Sigmoid colon (tissue), 7 donors: ENCODE measurements at regions of chr11 and their contacts with region 1.

Region 1: DNA sequence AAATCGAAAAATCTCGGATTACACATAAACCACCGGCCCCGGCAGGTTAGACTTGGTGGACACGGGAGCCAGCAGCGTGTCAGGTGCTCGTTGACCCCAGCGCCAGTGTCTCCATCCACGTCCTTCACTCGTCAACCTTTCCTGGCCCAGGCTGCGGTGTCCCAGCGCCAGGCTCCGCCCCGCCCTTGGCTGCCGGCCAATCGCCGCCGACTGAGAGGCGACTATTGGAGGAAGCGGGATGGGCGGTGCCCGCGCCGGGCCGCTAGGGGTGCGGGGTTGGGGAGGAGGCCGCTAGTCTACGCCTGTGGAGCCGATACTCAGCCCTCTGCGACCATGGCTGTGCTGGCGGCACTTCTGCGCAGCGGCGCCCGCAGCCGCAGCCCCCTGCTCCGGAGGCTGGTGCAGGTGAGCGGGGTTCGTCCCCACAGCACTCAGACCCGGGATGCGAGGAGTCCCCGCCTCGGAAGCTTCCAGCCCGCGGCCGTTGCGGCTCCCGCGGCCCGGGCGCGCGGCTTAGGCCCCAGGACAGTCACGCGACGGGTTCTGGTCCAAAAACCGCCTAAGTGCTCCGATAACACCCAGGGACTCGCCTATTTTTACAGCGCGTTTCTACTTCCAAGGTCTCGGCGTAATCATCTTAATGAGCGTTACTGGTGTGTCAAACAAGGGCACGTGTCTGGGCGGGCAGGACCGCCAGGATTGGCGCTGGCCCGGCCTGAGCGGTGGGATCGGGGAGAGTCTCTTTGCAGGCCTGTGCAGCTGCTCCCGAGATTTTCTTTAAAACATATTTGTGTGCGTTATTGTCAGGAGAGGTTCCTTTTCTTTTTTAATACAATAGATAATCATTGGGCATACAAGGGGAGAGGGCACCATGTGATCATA is at the start of gene ACAT1:
- DNase-seq: peak; percentile 99
- H3K4me3 ChIP-seq: peak within 1 kb of the TSS; percentile 59 to 84 (median 72)
- H3K27ac ChIP-seq: peak within 1 kb of the TSS; percentile 87 to 96 (median 92)
- H3K4me1 ChIP-seq: peaks cover 0 to 39% (median 34%) of the 10 kb centered on the region in 4 donors
- H3K27me3 ChIP-seq: no peaks in the 10 kb centered on the region
- CTCF ChIP-seq: peak; percentile 31 to 50 (median 36)
- EP300 ChIP-seq: no peak
- POLR2A ChIP-seq: peak; percentile 84 to 92
- total RNA-seq, gene ACAT1: 142 to 225 (median 163) TPM

Region 2: DNA sequence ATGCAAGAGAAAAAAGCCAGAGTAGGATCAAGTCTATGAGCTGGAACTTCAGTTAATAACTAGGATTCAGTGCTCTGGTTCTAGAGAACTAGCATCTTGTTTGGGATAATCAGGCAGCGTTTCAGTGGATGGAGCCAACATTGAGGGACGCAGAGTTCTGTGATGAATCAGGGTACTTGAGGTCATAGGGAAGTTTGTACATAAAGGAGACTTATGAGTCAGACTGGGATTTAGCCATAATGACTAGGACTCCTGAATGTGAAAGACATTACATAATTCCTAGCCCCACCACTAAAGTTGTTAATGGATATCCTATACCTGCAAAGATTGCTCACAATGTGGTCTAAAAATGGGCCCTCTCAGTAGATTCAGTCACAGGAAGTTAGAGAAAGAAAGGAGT is 416.5 kb before region 1 on chr11:
- intact Hi-C with region 1: no loop called
- DNase-seq: no peak
- H3K4me3 ChIP-seq: no peak overlapping the region
- H3K27ac ChIP-seq: no peak overlapping the region
- H3K4me1 ChIP-seq: no peaks in the 10 kb centered on the region
- H3K27me3 ChIP-seq: no peaks in the 10 kb centered on the region
- CTCF ChIP-seq: no peak
- EP300 ChIP-seq: no peak
- POLR2A ChIP-seq: no peak

Region 3: GRCh38 chr11:108008656-108009496 is 112.6 kb before region 1 on chr11 and contains the start of gene CUL5:
- intact Hi-C with region 1: loop called (anchors 5 kb)
- DNase-seq: peak; percentile 96
- H3K4me3 ChIP-seq: peak within 1 kb of the TSS; percentile 83 to 99 (median 85)
- H3K27ac ChIP-seq: peak within 1 kb of the TSS; percentile 97 to 99 (median 98)
- H3K4me1 ChIP-seq: peaks cover 0 to 46% (median 37%) of the 10 kb centered on the region in 4 donors
- H3K27me3 ChIP-seq: no peaks in the 10 kb centered on the region
- CTCF ChIP-seq: peak; percentile 59 to 90 (median 80)
- EP300 ChIP-seq: peak in 1 of 4 donors; percentile 18
- POLR2A ChIP-seq: peak in 1 of 2 donors; percentile 54
- total RNA-seq, gene CUL5: 26.5 to 33.7 (median 29.6) TPM

Region 4: GRCh38 chr11:108025387-108026080 is 96.0 kb before region 1 on chr11:
- intact Hi-C with region 1: loop called (anchors 5 kb)
- DNase-seq: no peak
- H3K4me3 ChIP-seq: peak overlapping the region in 1 of 4 donors; percentile 5
- H3K27ac ChIP-seq: peak overlapping the region; percentile 33 to 79 (median 68)
- H3K4me1 ChIP-seq: peaks cover 0 to 64% (median 27%) of the 10 kb centered on the region in 4 donors
- H3K27me3 ChIP-seq: no peaks in the 10 kb centered on the region
- CTCF ChIP-seq: peak in 2 of 4 experiments; percentile 29 to 42
- EP300 ChIP-seq: peak in 3 of 4 donors; percentile 5 to 85 (median 31)
- POLR2A ChIP-seq: no peak

Region 5: DNA sequence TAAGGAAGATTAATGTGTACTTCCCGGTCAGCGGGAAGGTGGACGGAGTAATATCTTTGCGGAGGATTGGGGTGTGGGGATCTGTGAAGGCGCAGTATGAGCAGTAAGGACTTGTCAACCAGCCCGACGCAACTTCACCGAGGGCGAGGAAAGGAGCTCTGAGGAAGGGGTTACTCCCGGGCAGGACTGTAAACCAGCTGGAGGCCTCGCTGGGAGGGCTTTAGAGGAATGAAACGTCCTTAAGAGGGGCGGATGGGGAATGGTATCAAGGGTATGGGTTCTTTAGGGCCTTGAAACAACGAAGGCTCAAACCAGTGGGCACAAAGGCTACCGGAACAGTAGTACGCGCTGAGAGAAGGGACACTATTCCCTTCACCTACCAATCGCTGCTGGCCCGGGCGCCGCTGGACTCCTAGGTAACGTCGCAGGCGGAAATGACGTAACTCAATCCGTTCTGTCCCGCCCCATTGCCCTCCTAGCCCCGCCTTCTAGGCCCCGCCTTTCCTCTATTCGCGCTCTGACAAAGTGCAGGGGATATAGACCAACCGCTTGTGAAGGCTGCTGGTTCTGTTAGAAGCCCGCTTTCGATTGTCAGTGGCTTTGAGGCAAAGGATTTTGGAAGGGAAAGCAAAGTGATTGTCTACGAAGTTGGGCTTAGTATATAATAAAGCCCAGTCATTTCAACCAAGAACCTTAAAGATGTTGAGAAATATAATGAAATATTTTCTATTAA is 345.7 kb after region 1 on chr11 and contains the start of gene C11orf65:
- intact Hi-C with region 1: loop called (anchors 5 kb)
- DNase-seq: peak; percentile 99
- H3K4me3 ChIP-seq: peak within 1 kb of the TSS; percentile 56 to 73 (median 64)
- H3K27ac ChIP-seq: peak within 1 kb of the TSS; percentile 94 to 98 (median 97)
- H3K4me1 ChIP-seq: peaks cover 0 to 11% (median 0%) of the 10 kb centered on the region in 4 donors
- H3K27me3 ChIP-seq: no peaks in the 10 kb centered on the region
- CTCF ChIP-seq: no peak
- EP300 ChIP-seq: peak in 1 of 4 donors; percentile 24
- POLR2A ChIP-seq: peak; percentile 93 to 96
- total RNA-seq, gene C11orf65: 0.14 to 1.1 (median 0.51) TPM

Region 6: GRCh38 chr11:108664730-108665525 is 543.4 kb after region 1 on chr11 and contains the start of gene DDX10:
- intact Hi-C with region 1: loop called (anchors 10 kb)
- DNase-seq: peak; percentile 99
- H3K4me3 ChIP-seq: peak within 1 kb of the TSS; percentile 72 to 90 (median 81)
- H3K27ac ChIP-seq: peak within 1 kb of the TSS; percentile 68 to 81 (median 70)
- H3K4me1 ChIP-seq: peaks cover 0 to 29% (median 26%) of the 10 kb centered on the region in 4 donors
- H3K27me3 ChIP-seq: no peaks in the 10 kb centered on the region
- CTCF ChIP-seq: no peak
- EP300 ChIP-seq: peak in 1 of 4 donors; percentile 21
- POLR2A ChIP-seq: no peak
- total RNA-seq, gene DDX10: 12.8 to 41.0 (median 26.7) TPM